T-cell (primary cell): ENCODE measurements at regions of chr14 and their contacts with region 1.

Region 1: DNA sequence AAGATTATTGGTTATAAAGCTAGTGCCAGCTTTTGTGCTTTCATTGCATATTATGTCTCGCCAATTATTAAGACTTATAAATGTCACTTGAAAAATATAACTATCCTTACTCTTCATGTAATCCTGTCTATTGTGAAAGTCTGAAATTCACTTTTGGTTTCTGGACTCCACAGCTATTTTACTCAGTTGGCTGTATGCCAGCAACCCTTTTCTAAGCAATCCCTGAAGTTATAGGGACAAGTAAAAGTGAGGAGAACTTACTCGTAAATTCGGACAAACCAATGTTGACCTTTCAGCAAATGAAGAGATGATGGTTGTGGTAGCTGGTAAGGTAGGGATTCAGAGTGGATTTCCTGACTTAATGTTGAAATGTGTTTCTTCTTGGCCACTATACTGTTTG is 196.3 kb downstream of the NPAS3 start:
- DNase-seq: no peak
- ATAC-seq: no peak
- H3K4me3 ChIP-seq: no peak overlapping the region
- H3K4me3 Mint-ChIP-seq: no peak overlapping the region
- H3K27ac ChIP-seq: no peak overlapping the region
- H3K27ac Mint-ChIP-seq: no peak overlapping the region
- H3K4me1 ChIP-seq: no peaks in the 10 kb centered on the region
- H3K4me1 Mint-ChIP-seq: no peaks in the 10 kb centered on the region
- H3K27me3 ChIP-seq: no peaks in the 10 kb centered on the region
- H3K27me3 Mint-ChIP-seq: no peaks in the 10 kb centered on the region

Region 2: DNA sequence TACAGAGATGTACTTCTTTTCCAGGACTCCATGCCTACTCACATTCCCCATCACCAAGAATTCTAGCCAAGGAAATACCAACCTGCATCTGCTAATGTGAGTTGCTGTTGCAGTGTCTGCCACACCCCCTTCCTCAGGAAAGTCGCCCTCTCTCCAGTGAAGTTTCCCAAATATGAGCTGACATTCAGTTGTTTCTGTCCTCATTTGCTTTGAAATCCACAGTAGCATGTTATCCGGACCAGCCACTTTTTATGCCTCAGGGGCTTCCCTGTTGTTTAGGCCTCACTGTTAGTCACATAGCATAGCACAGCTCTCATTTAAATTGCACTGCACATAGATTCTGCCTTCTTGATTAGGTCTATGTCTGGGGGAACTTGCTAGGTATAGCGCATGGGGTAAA is 603.5 kb after region 1 on chr14:
- CTCF ChIA-PET with region 1: no interaction called
- POLR2A ChIA-PET with region 1: interaction called in 1 of 2 experiments, 10 read pairs
- DNase-seq: no peak
- ATAC-seq: no peak
- H3K4me3 ChIP-seq: no peak overlapping the region
- H3K4me3 Mint-ChIP-seq: no peak overlapping the region
- H3K27ac ChIP-seq: no peak overlapping the region
- H3K27ac Mint-ChIP-seq: no peak overlapping the region
- H3K4me1 ChIP-seq: peaks cover 0 to 4% of the 10 kb centered on the region in 2 experiments
- H3K4me1 Mint-ChIP-seq: peaks cover 0 to 9% (median 3%) of the 10 kb centered on the region in 3 donors
- H3K27me3 ChIP-seq: no peaks in the 10 kb centered on the region
- H3K27me3 Mint-ChIP-seq: peaks cover 0 to 4% of the 10 kb centered on the region in 2 donors